MCF 10A (cell line): ENCODE measurements at regions of chr5 and their contacts with region 1.

Region 1: GRCh38 chr5:127875235-127876021 is 172.2 kb downstream of the CCDC192 start:
- DNase-seq: peak; percentile 86
- H3K4me3 Mint-ChIP-seq: no peak overlapping the region
- H3K27ac Mint-ChIP-seq: peak overlapping the region; percentile 47
- H3K4me1 Mint-ChIP-seq: peaks cover 24% of the 10 kb centered on the region
- H3K27me3 Mint-ChIP-seq: no peaks in the 10 kb centered on the region
- CTCF ChIP-seq: peak; percentile 58

Region 2: DNA sequence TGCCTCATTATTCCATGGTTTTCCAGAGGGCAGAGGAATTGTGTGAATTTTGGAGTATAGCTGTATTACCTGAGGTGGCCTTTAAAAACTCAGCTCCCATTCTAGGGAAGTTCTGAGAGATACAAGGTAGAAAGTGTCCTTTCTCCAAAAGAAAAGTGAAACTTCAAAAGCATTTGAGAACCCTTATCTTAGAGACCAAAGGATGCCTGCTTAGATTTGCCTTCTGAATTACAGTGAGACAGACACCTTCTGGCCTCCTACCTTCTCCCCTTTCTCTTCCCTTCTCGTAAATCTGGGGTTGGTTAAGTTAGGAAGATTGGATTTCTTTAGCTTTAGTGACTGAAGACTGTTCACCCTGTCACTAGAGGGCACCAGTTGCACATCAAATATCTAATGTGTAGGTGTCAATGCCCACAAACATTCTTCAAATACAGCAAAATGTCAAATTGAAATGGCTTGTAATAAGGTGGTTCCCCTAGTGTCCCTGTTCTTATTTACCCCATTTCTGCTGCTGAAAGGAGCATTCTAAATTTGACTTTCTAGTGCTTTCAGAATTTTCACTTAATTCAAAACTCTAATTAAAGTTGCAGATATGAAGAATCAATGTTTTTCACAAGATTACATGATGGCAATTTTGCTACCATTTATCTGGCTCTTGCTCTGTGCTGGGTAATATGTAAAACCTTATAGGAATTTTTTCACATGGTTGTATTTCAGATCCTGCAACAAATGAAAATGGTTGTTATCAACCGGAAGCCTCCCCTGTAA is 311.2 kb before region 1 on chr5:
- CTCF ChIA-PET with region 1: interaction called, 9 read pairs
- POLR2A ChIA-PET with region 1: interaction called, 3 read pairs
- intact Hi-C with region 1: loop called (anchors 5 kb)
- DNase-seq: peak; percentile 89
- H3K4me3 Mint-ChIP-seq: no peak overlapping the region
- H3K27ac Mint-ChIP-seq: no peak overlapping the region
- H3K4me1 Mint-ChIP-seq: peaks cover 5% of the 10 kb centered on the region
- H3K27me3 Mint-ChIP-seq: peaks cover 10% of the 10 kb centered on the region
- CTCF ChIP-seq: peak; percentile 77

Region 3: DNA sequence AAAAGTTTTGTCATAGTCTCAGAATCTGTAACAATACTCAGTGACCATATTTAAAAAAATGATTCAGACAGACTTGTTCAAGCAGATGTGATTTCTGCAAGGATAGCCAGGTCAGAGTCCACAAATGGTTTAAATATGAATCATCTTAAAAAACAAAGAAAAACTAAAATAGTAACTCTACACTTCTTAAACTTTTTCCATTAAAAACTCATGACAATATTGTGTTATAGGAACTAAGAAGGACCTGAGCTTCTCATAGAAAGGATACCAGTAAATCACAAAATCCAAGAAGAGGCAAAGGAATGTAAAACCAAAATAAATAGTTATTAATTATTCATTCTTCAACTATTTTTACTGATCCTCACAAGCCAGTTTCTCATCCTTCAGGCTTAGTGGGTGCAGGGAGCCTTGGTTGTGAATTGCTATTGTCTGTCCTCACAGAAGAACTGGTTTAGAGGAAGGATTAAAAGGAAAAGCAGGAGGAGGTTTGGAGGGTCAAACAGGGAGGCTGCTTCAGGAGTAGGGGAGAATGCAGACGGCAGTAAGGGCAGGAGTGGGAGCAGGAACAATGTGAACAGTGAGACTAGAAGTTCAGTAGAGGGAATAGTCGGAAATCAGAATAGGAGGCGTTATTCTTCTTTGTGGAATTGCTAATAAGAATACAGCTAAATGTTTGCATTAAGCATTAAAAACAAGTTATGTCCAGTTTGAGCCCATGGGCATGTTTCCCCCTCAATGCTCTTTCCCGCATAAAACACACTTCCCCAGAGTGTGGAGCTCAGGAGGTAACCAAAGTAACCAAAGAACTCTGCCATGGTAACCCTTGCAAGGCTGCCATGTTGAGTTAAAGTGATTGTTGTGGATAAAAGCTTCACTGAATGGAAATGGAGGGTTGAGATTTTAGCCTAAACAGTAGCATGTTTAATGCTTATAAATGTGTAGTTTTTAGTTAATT is 61.5 kb before region 1 on chr5:
- CTCF ChIA-PET with region 1: interaction called, 3 read pairs
- POLR2A ChIA-PET with region 1: interaction called, 12 read pairs
- intact Hi-C with region 1: no loop called
- DNase-seq: peak; percentile 66
- H3K4me3 Mint-ChIP-seq: peak overlapping the region; percentile 1
- H3K27ac Mint-ChIP-seq: peak overlapping the region; percentile 32
- H3K4me1 Mint-ChIP-seq: peaks cover 17% of the 10 kb centered on the region
- H3K27me3 Mint-ChIP-seq: no peaks in the 10 kb centered on the region
- CTCF ChIP-seq: no peak

Region 4: DNA sequence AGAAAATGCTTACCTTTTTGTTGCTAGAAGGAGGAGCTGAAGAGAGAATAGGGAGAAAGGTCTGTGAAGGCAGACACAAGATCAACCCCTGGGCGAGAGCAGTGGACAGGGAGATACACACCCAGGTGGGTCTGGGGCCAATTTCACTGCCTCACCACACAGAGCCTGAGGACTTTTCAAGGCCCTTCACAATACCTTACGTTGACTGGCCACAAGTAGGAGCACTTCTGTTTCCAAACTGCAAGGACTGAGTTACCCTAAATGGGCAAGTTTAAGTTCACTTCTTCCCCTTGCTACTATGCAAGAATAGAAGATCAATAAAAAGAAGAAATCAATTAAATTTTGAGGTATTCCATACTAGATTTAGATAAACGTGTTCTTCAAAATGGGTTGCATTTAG is 33.6 kb after region 1 on chr5:
- CTCF ChIA-PET with region 1: interaction called, 10 read pairs
- POLR2A ChIA-PET with region 1: no interaction called
- intact Hi-C with region 1: no loop called
- DNase-seq: peak; percentile 84
- H3K4me3 Mint-ChIP-seq: no peak overlapping the region
- H3K27ac Mint-ChIP-seq: no peak overlapping the region
- H3K4me1 Mint-ChIP-seq: no peaks in the 10 kb centered on the region
- H3K27me3 Mint-ChIP-seq: no peaks in the 10 kb centered on the region
- CTCF ChIP-seq: peak; percentile 60

Region 5: GRCh38 chr5:128674825-128675446 is 799.5 kb after region 1 on chr5:
- CTCF ChIA-PET with region 1: no interaction called
- POLR2A ChIA-PET with region 1: no interaction called
- intact Hi-C with region 1: loop called (anchors 10 kb)
- DNase-seq: peak; percentile 84
- H3K4me3 Mint-ChIP-seq: no peak overlapping the region
- H3K27ac Mint-ChIP-seq: no peak overlapping the region
- H3K4me1 Mint-ChIP-seq: no peaks in the 10 kb centered on the region
- H3K27me3 Mint-ChIP-seq: no peaks in the 10 kb centered on the region
- CTCF ChIP-seq: peak; percentile 81